ENCODE measurements at regions of chr9 and their contacts with region 1.

Region 1: GRCh38 chr9:98255578-98256296 is at the start of gene TBC1D2:
- DNase-seq: peak; percentile 91 to 93
- ATAC-seq: peak; percentile 95
- H3K4me3 ChIP-seq: peak within 1 kb of the TSS; percentile 76 to 100 (median 78)
- H3K27ac ChIP-seq: peak within 1 kb of the TSS; percentile 90 to 100 (median 93)
- H3K4me1 ChIP-seq: peaks cover 11 to 20% of the 10 kb centered on the region in 2 donors
- H3K27me3 ChIP-seq: no peaks in the 10 kb centered on the region
- CTCF ChIP-seq: peak in 2 of 5 experiments; percentile 25 to 30
- POLR2A ChIP-seq: peak; percentile 41 to 45
- total RNA-seq, gene TBC1D2: 0.66 to 2.9 (median 1.6) TPM

Region 2: GRCh38 chr9:97696803-97697601 is 558.7 kb before region 1 on chr9 and contains the start of gene XPA:
- in situ Hi-C with region 1: loop called (anchors 10 to 25 kb)
- intact Hi-C with region 1: loop called (anchors 5 kb)
- DNase-seq: peak; percentile 93 to 96
- ATAC-seq: peak; percentile 93 to 95
- H3K4me3 ChIP-seq: peak within 1 kb of the TSS; percentile 81 to 100 (median 92)
- H3K27ac ChIP-seq: peak within 1 kb of the TSS; percentile 93 to 98 (median 94)
- H3K4me1 ChIP-seq: peaks cover 21 to 38% of the 10 kb centered on the region in 2 donors
- H3K27me3 ChIP-seq: no peaks in the 10 kb centered on the region
- CTCF ChIP-seq: peak in 2 of 5 experiments; percentile 2 to 13
- POLR2A ChIP-seq: peak; percentile 91 to 92
- total RNA-seq, gene XPA: 4.8 to 14.8 (median 9.7) TPM

Region 3: DNA sequence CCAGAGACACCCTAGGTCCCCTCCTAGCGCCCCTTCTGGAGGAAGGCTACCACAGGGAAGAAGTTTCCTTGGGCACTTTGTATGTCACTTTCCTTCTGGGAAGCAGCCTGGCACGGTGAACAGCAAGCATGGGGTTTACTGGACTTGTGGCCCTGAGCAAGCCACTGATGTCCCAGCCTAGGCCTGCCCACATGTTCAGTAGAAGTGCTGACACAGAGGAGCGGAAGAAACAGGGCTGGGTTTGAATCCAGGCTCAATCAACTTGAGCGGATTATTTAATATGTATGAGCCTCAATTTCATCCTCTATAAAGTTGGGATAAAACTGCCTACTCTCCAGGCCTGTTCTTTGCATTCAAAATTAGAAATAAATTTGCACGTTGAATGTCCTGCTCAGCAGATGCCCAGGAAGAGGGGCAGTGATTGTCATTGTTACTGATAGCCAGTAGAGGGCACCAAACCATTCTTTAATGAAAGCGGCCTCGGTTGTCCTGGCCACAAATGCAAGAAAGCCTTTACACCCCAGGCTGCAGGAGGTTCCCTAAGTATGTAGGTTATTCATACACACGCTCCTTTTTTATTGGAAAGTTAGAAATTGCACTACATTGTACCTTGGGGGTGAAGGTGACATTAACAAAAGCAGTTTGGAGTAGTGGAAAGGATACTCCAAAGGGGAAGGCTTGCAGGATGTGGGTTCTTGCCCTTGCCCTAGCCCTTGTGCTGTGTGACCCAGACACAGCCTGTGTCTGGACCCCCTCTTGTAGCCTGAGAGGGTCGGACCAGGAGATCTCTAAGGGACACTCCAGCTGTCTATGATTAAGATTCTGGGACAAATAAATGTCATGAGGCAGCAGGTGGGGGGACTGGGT is 545.1 kb before region 1 on chr9:
- in situ Hi-C with region 1: loop called (anchors 10 to 25 kb)
- intact Hi-C with region 1: no loop called
- DNase-seq: peak in 1 of 2 donors; percentile 19
- ATAC-seq: peak; percentile 80 to 94
- H3K4me3 ChIP-seq: no peak overlapping the region
- H3K27ac ChIP-seq: no peak overlapping the region
- H3K4me1 ChIP-seq: peaks cover 0 to 5% of the 10 kb centered on the region in 2 donors
- H3K27me3 ChIP-seq: no peaks in the 10 kb centered on the region
- CTCF ChIP-seq: peak; percentile 52 to 84 (median 75)
- POLR2A ChIP-seq: no peak

Region 4: GRCh38 chr9:98056269-98057137 is 199.2 kb before region 1 on chr9 and contains the start of gene NANS:
- in situ Hi-C with region 1: loop called in 2 of 4 experiments (anchors 10 to 25 kb)
- intact Hi-C with region 1: loop called (anchors 5 kb)
- DNase-seq: peak; percentile 91
- ATAC-seq: peak; percentile 95 to 98
- H3K4me3 ChIP-seq: peak within 1 kb of the TSS; percentile 72 to 83 (median 74)
- H3K27ac ChIP-seq: peak within 1 kb of the TSS; percentile 91 to 93 (median 92)
- H3K4me1 ChIP-seq: peaks cover 8 to 15% of the 10 kb centered on the region in 2 donors
- H3K27me3 ChIP-seq: no peaks in the 10 kb centered on the region
- CTCF ChIP-seq: peak in 1 of 5 experiments; percentile 13
- POLR2A ChIP-seq: peak; percentile 92 to 98
- total RNA-seq, gene NANS: 29.0 to 64.7 (median 34.2) TPM

Region 5: DNA sequence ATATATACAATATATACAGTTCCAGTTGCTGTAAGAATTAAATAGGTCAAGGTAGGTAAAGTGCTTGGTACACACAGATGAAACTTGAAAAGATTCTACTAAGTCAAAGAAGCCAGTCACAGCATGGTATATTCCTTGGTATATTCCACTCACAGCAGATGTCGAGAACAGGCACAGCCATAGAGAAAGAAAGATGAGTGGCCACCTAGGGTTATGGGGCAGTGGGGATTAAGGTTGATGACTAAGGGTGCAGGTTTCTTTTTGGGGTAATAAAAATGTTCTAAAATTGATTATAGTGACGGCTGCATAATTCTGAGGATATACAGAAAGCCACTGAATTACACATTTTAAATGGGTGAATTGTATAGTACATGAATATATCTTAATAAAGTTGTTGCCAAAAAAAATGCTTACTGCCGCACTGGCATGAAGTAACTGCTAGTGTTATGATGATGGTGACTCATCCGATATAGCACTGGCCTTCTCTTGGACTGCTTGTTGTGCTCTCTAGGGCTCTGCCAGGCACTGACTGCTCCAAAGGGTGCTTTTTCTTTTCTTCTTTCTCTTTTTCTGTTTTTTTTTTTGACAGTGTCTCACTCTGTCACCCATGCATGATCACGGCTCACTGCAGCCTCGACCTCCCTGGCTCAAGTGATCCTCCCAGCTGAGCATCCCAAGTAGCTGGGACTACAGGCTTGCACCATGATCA is 23.8 kb before region 1 on chr9:
- in situ Hi-C with region 1: no loop called
- intact Hi-C with region 1: no loop called
- DNase-seq: no peak
- ATAC-seq: no peak
- H3K4me3 ChIP-seq: no peak overlapping the region
- H3K27ac ChIP-seq: no peak overlapping the region
- H3K4me1 ChIP-seq: peaks cover 0 to 4% of the 10 kb centered on the region in 2 donors
- H3K27me3 ChIP-seq: no peaks in the 10 kb centered on the region
- CTCF ChIP-seq: no peak
- POLR2A ChIP-seq: no peak

Measured in gastrocnemius medialis (tissue), 4 donors.